ENCODE measurements at regions of chr3 and their contacts with region 1.

Region 1: DNA sequence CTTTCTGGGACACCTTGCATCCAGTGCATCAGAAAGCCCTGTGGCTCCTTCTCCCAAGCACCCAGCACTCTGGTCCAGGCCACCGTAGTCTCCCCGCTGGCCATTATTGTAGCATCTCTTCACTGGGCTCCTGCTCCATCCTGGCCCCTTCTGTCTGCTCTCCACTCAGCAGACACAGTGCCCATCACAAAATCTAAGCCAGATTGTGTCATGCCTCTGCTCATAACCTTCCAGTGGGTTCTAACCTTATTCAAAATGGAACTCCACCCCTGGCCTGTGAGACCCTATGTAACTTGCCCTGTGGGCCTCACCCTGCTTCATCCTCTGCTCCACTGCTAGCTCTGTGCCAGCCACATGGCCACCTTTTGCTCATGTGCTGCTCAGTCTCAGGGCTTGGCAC is 31.7 kb upstream of the PRR23E start:
- DNase-seq: no peak
- H3K4me3 ChIP-seq: no peak overlapping the region
- H3K27ac ChIP-seq: no peak overlapping the region
- H3K4me1 ChIP-seq: no peaks in the 10 kb centered on the region
- H3K27me3 ChIP-seq: peaks cover 0 to 20% of the 10 kb centered on the region in 2 donors
- CTCF ChIP-seq: no peak
- POLR2A ChIP-seq: no peak

Region 2: GRCh38 chr3:127192576-127193232 is 31.5 kb after region 1 on chr3 and contains the start of gene PRR23E:
- intact Hi-C with region 1: loop called (anchors 1 kb)
- DNase-seq: no peak
- H3K4me3 ChIP-seq: no peak within 1 kb of the TSS
- H3K27ac ChIP-seq: no peak within 1 kb of the TSS
- H3K4me1 ChIP-seq: no peaks in the 10 kb centered on the region
- H3K27me3 ChIP-seq: no peaks in the 10 kb centered on the region
- CTCF ChIP-seq: no peak
- POLR2A ChIP-seq: no peak
- total RNA-seq, gene PRR23E: not detected

Region 3: GRCh38 chr3:127217598-127218451 is 56.6 kb after region 1 on chr3:
- intact Hi-C with region 1: no loop called
- DNase-seq: no peak
- H3K4me3 ChIP-seq: no peak overlapping the region
- H3K27ac ChIP-seq: no peak overlapping the region
- H3K4me1 ChIP-seq: no peaks in the 10 kb centered on the region
- H3K27me3 ChIP-seq: peaks cover 0 to 4% of the 10 kb centered on the region in 2 donors
- CTCF ChIP-seq: no peak
- POLR2A ChIP-seq: no peak